Naive thymus-derived CD8-positive, alpha-beta T cell (primary cell): ENCODE measurements at regions of chr17 and their contacts with region 1.

Region 1: DNA sequence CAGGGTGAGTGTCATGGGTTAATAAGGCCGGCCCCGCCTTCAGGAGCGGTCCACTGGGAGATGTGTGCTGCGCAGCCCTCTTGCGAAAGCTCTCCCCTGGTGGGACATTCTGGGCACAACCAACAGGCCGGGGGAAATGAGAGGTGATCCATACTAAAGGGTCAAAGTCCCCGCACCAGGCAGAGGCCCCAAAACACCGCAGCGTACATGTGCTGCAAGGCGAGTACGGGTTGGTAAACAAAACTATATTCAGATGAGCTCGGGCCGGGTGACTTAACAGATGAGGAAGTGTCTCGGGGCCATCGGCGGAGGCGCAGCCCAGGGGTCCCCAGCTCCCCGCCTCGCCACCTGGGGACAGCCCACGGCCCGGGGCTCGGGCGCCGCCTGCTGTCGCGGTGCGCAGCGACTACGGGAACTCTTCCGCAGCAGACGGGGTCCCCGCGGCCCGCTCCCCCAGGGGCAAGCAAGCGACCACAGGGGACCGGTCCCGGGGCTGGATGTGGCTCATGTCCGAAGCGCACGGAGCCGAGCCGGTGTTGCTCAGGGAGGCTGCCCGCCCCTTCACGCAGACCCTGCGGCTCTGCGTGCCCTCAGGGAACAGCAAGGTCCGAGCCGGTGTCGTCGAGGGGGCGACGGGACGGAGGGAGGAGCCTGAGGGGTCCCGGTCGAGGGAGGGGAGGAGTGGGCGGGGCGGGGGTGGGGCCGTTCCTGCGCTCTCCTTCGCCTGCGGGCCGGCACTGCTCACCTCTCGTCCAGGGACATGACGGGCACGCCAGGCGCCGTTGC is at the start of gene RAB37:
- DNase-seq: peak; percentile 36 to 76 (median 56)
- ATAC-seq: peak; percentile 49 to 56
- H3K4me3 Mint-ChIP-seq: peak within 1 kb of the TSS; percentile 86 to 98 (median 94)
- H3K27ac Mint-ChIP-seq: peak within 1 kb of the TSS; percentile 90 to 99 (median 94)
- H3K4me1 Mint-ChIP-seq: peaks cover 22 to 53% (median 51%) of the 10 kb centered on the region in 4 donors
- H3K27me3 Mint-ChIP-seq: no peaks in the 10 kb centered on the region
- polyA plus RNA-seq, gene RAB37: 55.3 to 108 (median 76.0) TPM

Region 2: DNA sequence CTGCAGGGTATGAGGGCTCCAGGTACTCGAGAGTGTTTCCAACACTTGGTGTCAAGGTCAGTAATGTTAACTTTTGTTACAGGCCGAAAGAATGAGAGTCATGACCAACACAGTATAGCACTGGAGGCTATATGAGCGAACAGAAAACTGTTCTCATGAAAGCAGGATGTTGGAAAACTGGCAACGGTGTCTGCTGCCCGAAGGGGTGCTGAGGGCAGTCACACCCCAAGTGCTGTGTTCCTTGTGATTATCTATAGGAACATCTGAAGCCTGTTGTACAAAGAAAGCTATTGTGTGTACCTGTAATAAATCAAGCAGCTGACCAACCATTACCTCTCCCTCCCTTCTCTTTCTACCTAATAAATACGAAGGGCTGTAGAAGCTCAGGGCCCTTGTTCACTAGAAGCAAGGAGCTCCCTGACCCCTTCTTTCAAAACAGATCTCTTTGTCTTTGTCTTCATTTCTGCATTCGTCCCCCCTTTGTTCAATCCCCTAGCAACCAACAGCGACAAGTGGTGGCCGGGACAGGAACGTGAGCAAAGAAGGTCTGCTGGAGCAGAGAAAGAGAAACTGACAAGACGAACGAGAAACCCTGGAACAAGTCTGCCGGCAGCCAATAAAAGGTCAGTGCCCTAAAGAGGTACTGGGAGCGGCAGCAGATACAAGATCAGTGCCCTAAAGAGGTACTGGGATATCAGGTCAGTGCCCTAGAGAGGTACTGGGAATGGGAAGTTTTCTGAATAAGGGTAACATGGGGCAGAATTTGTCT is 152.2 kb before region 1 on chr17:
- POLR2A ChIA-PET with region 1: no interaction called
- DNase-seq: no peak
- ATAC-seq: no peak
- H3K4me3 Mint-ChIP-seq: no peak overlapping the region
- H3K27ac Mint-ChIP-seq: no peak overlapping the region
- H3K4me1 Mint-ChIP-seq: peaks cover 7 to 13% (median 10%) of the 10 kb centered on the region in 4 donors
- H3K27me3 Mint-ChIP-seq: peaks cover 0 to 12% (median 0%) of the 10 kb centered on the region in 5 donors

Region 3: DNA sequence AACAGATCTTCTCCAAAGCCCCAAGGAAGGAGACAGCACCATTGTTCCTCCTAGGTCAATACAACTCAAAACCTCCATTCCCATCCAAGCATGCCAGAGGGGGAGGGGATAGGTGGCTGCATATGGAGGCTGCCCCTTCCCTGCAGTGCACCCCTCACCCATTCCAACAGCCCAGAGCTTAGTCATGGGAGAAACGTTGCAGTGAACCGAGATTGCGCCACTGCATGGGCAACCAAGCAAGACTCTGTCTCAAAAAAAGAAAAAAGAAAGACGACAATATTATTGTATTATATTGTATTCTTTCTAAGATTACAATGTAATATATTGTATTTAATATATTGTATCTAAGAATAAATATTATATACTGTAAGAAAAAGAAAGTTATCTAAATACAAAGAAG is 76.8 kb before region 1 on chr17:
- POLR2A ChIA-PET with region 1: interaction called, 71 read pairs
- DNase-seq: no peak
- ATAC-seq: no peak
- H3K4me3 Mint-ChIP-seq: no peak overlapping the region
- H3K27ac Mint-ChIP-seq: no peak overlapping the region
- H3K4me1 Mint-ChIP-seq: peaks cover 4 to 7% (median 6%) of the 10 kb centered on the region in 4 donors
- H3K27me3 Mint-ChIP-seq: peaks cover 17 to 43% (median 35%) of the 10 kb centered on the region in 5 donors

Region 4: DNA sequence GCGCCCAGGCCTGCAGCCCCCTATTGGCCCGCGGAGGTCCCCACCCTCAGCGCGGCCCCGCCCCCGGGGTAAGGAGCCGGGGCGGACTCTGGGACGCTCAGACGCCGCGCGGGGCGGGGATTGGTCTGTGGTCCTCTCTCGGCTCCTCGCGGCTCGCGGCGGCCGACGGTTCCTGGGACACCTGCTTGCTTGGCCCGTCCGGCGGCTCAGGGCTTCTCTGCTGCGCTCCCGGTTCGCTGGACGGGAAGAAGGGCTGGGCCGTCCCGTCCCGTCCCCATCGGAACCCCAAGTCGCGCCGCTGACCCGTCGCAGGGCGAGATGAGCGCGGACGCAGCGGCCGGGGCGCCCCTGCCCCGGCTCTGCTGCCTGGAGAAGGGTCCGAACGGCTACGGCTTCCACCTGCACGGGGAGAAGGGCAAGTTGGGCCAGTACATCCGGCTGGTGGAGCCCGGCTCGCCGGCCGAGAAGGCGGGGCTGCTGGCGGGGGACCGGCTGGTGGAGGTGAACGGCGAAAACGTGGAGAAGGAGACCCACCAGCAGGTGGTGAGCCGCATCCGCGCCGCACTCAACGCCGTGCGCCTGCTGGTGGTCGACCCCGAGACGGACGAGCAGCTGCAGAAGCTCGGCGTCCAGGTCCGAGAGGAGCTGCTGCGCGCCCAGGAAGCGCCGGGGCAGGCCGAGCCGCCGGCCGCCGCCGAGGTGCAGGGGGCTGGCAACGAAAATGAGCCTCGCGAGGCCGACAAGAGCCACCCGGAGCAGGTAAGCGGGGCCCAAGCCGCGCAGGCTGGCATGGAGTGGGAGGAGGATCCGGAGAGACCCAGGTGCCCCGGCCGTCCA is 12.0 kb after region 1 on chr17 and contains the start of gene NHERF1:
- POLR2A ChIA-PET with region 1: interaction called, 200 read pairs
- DNase-seq: peak; percentile 87 to 94 (median 92)
- ATAC-seq: peak; percentile 82 to 84
- H3K4me3 Mint-ChIP-seq: peak within 1 kb of the TSS; percentile 92 to 100 (median 98)
- H3K27ac Mint-ChIP-seq: peak within 1 kb of the TSS; percentile 87 to 97 (median 94)
- H3K4me1 Mint-ChIP-seq: peaks cover 42 to 78% (median 71%) of the 10 kb centered on the region in 4 donors
- H3K27me3 Mint-ChIP-seq: no peaks in the 10 kb centered on the region
- polyA plus RNA-seq, gene NHERF1: 277 to 351 (median 324) TPM

Region 5: GRCh38 chr17:74759243-74759801 is 22.6 kb after region 1 on chr17:
- POLR2A ChIA-PET with region 1: interaction called, 200 read pairs
- DNase-seq: peak in 8 of 10 donors; percentile 34 to 74 (median 56)
- ATAC-seq: peak; percentile 91 to 92
- H3K4me3 Mint-ChIP-seq: peak overlapping the region; percentile 69 to 97 (median 84)
- H3K27ac Mint-ChIP-seq: peak overlapping the region; percentile 88 to 94 (median 92)
- H3K4me1 Mint-ChIP-seq: peaks cover 30 to 81% (median 71%) of the 10 kb centered on the region in 4 donors
- H3K27me3 Mint-ChIP-seq: no peaks in the 10 kb centered on the region

Region 6: GRCh38 chr17:74770498-74771318 is 34.0 kb after region 1 on chr17:
- POLR2A ChIA-PET with region 1: interaction called, 39 read pairs
- DNase-seq: peak; percentile 60 to 88 (median 72)
- ATAC-seq: peak; percentile 93 to 96
- H3K4me3 Mint-ChIP-seq: peak overlapping the region in 2 of 10 donors; percentile 2 to 14
- H3K27ac Mint-ChIP-seq: peak overlapping the region; percentile 43 to 91 (median 84)
- H3K4me1 Mint-ChIP-seq: peaks cover 30 to 41% (median 36%) of the 10 kb centered on the region in 4 donors
- H3K27me3 Mint-ChIP-seq: no peaks in the 10 kb centered on the region

Region 7: GRCh38 chr17:74776044-74776977 is 39.6 kb after region 1 on chr17 and contains the start of gene NAT9:
- POLR2A ChIA-PET with region 1: interaction called, 39 read pairs
- DNase-seq: peak; percentile 95 to 100 (median 98)
- ATAC-seq: peak; percentile 76 to 83
- H3K4me3 Mint-ChIP-seq: peak within 1 kb of the TSS; percentile 96 to 100 (median 99)
- H3K27ac Mint-ChIP-seq: peak within 1 kb of the TSS; percentile 93 to 99 (median 96)
- H3K4me1 Mint-ChIP-seq: peaks cover 26 to 71% (median 61%) of the 10 kb centered on the region in 4 donors
- H3K27me3 Mint-ChIP-seq: no peaks in the 10 kb centered on the region
- polyA plus RNA-seq, gene NAT9: 9.8 to 28.3 (median 20.2) TPM

Region 8: DNA sequence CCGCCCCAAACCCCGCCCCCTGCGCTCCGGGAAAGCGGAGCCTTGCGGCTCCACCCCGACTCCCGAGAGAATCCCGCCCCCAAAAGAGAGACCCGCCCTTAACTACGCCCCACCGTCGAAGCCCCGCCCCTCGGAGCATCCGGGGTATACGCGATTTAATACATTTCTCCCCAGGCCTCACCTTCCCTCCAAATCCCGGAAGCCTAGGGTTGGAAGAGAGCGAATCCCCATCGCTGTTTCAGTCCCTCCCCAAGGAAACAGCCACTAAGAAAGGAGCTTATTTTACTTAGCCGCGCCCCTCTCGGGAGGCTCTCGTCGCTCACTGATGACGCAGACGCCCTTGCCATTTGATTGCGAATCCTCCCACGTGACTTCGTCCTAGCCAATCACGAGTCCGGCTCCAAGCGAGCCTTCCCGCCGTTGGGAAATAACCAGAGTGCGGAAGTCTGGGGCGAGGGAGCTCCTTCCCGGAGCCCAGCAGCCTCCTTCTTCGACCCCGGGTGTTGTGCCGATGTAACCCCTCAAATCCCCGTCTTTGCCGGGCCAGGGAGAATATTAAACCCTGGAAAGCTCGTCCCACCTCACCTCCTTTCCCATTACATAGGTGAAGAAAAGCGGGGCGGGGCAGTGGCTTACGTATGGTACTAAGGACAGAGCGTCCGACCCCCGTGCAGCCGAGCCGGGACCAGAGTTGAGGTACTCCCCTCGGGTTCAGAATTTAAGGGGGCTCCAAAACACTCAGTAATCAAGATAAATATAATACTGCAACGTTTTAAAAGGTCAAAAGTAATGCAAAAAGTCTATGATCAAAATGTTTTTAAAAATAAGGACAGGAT is 136.6 kb after region 1 on chr17:
- POLR2A ChIA-PET with region 1: interaction called, 11 read pairs
- DNase-seq: peak; percentile 97 to 100 (median 99)
- ATAC-seq: peak; percentile 95 to 96
- H3K4me3 Mint-ChIP-seq: peak overlapping the region; percentile 83 to 98 (median 94)
- H3K27ac Mint-ChIP-seq: peak overlapping the region; percentile 92 to 99 (median 98)
- H3K4me1 Mint-ChIP-seq: peaks cover 16 to 25% (median 23%) of the 10 kb centered on the region in 4 donors
- H3K27me3 Mint-ChIP-seq: no peaks in the 10 kb centered on the region